Esophagus muscularis mucosa (tissue), 4 donors: ENCODE measurements at regions of chr2 and their contacts with region 1.

Region 1: DNA sequence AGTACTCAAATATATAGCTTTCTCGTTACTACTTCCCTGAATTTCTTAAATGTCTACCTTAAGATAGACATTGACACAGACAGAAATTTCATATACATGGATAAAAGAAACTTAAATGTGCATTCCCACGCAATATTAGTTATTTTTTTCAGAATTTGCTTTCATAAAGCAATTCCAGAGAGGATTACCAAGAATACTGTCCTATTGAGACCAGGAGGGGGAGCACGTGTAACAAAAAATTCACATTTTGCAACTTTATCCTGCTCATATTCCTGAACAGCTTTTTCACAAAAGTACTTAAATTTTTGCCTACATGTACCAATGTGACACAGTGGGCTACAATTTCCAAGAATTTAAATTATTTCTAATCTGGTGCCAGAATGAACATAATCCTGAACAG is 30.7 kb upstream of the ERCC3 start:
- DNase-seq: no peak
- H3K4me3 ChIP-seq: no peak overlapping the region
- H3K27ac ChIP-seq: no peak overlapping the region
- H3K4me1 ChIP-seq: peaks cover 0 to 10% (median 8%) of the 10 kb centered on the region in 4 donors
- H3K27me3 ChIP-seq: no peaks in the 10 kb centered on the region
- CTCF ChIP-seq: peak; percentile 60 to 67 (median 64)
- EP300 ChIP-seq: no peak
- POLR2A ChIP-seq: no peak

Region 2: DNA sequence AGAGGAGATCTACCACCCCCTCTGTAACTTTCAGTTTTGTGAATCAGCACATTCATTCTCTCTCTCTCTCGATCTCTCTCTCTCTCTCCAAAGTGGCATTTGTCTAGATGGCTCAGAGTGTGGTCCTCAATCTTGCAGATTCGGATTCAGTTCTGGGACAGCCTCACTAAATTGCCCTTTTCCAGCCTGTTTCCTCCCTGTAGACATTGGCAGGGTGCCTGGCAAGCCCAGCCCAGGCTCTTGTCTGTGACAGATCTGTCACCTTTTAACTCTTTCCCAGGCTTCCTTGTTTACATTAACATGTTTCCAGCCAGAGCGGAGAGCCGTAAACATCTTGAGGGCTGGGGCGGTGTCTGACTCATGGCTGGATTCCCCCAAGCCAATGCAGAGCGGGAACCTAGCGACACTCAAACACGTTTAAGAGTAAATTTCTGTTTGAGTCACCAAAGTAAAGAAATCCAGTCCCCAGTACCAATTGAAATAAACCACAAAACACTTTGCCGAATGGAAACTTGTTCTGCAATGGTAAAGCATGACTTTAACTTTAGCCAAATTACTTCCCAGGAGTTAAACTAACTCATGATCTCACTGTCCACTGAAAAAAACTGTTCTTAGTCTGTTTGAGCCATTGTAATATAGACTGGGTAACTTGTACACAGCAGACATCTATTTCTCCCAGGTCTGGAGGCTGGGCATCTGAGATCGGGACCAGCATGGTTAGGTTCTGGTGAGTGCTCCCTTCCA is 97.9 kb before region 1 on chr2:
- intact Hi-C with region 1: no loop called
- DNase-seq: no peak
- H3K4me3 ChIP-seq: peak overlapping the region in 1 of 4 donors; percentile 16
- H3K27ac ChIP-seq: no peak overlapping the region
- H3K4me1 ChIP-seq: peaks cover 0 to 19% (median 13%) of the 10 kb centered on the region in 4 donors
- H3K27me3 ChIP-seq: no peaks in the 10 kb centered on the region
- CTCF ChIP-seq: no peak
- EP300 ChIP-seq: no peak
- POLR2A ChIP-seq: no peak

Region 3: DNA sequence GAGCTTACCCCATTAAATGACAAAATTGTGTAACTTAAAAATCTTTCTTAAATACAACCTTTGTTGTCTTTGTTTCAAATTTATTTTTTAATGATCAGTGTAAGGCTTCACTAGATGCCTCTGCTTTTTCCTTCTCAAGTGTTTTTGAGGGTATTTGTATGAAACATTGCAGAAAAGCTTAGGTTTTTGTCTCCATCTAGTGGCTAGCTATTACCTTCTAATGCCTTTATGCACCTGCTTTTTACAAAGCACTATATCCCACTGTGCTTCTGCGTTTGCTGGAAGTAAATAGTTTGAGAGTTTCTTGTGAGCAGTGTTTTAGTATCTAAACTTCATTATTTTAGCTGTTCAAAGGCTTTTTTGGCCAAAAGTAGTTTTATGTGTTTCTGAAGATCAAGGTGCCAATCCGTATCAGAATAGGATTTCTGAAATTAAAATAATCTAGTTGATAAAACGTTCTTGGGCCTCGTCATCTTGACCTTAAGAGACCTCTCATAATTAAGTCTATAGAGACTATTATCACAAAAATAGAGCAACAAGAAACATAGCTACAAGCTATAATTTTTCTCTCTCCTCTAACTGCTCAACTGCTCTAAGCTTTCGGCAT is 154.7 kb after region 1 on chr2:
- intact Hi-C with region 1: loop called (anchors 2 kb)
- DNase-seq: no peak
- H3K4me3 ChIP-seq: no peak overlapping the region
- H3K27ac ChIP-seq: no peak overlapping the region
- H3K4me1 ChIP-seq: no peaks in the 10 kb centered on the region
- H3K27me3 ChIP-seq: no peaks in the 10 kb centered on the region
- CTCF ChIP-seq: peak; percentile 54 to 68 (median 60)
- EP300 ChIP-seq: no peak
- POLR2A ChIP-seq: no peak